HCT116 (cell line): ENCODE measurements at regions of chr4 and their contacts with region 1.

Region 1: DNA sequence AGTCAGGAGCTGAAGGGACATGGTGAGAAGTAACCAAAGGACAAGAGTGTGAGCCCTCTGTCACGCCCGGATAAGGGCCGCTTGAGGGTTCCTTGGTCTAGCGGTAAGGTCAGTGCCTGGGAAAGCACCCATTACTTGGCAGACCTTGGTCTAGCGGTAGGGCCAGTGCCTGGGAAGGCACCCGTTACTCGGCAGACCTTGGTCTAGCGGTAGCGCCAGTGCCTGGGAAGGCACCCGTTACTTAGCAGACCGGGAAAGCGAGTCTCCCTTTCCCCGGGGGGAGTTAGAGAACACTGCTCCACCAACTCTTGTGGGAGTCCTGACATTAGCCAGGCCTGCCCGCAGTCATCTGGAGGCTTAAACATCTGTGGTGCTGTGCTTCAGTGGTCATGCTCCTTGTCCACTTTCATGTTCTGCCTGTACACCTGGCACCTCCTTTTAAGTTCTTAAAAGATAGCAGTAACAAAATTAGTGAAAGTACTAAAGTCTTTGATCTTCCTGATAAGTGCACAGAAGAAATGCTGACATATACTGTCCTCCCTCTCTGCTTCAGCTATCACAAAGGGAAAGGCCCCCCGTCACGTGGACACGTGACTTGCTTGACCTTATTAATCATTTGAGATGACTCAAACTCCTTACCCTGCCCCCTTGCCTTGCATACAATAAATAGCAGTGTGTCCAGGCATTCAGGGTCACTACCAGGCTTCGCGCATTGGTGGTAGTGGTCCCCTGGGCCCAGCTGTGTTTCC is 9.3 kb upstream of the SEC24B start:
- DNase-seq: no peak
- ATAC-seq: no peak
- H3K4me3 ChIP-seq: no peak overlapping the region
- H3K27ac ChIP-seq: no peak overlapping the region
- H3K4me1 ChIP-seq: 0 out of 4 replicates have a peak, but pooled peaks cover 0 to 4% of the 10 kb centered on the region in 2 experiments
- H3K27me3 ChIP-seq: no peaks in the 10 kb centered on the region
- CTCF ChIP-seq: no peak
- POLR2A ChIP-seq: no peak
- RAD21 ChIP-seq: no peak

Region 2: GRCh38 chr4:108581083-108581482 is 843.2 kb before region 1 on chr4:
- CTCF ChIA-PET with region 1: no interaction called
- POLR2A ChIA-PET with region 1: no interaction called
- RAD21 ChIA-PET with region 1: no interaction called
- intact Hi-C with region 1: no loop called
- DNase-seq: no peak
- ATAC-seq: no peak
- H3K4me3 ChIP-seq: no peak overlapping the region
- H3K27ac ChIP-seq: no peak overlapping the region
- H3K4me1 ChIP-seq: no peaks in the 10 kb centered on the region
- H3K27me3 ChIP-seq: no peaks in the 10 kb centered on the region
- CTCF ChIP-seq: no peak
- POLR2A ChIP-seq: no peak
- RAD21 ChIP-seq: no peak

Region 3: GRCh38 chr4:109134268-109134667 is 290.0 kb before region 1 on chr4:
- CTCF ChIA-PET with region 1: no interaction called
- POLR2A ChIA-PET with region 1: no interaction called
- RAD21 ChIA-PET with region 1: no interaction called
- intact Hi-C with region 1: no loop called
- DNase-seq: no peak
- ATAC-seq: no peak
- H3K4me3 ChIP-seq: no peak overlapping the region
- H3K27ac ChIP-seq: no peak overlapping the region
- H3K4me1 ChIP-seq: no peaks in the 10 kb centered on the region
- H3K27me3 ChIP-seq: peaks cover 29% of the 10 kb centered on the region
- CTCF ChIP-seq: no peak
- POLR2A ChIP-seq: no peak
- RAD21 ChIP-seq: no peak

Region 4: DNA sequence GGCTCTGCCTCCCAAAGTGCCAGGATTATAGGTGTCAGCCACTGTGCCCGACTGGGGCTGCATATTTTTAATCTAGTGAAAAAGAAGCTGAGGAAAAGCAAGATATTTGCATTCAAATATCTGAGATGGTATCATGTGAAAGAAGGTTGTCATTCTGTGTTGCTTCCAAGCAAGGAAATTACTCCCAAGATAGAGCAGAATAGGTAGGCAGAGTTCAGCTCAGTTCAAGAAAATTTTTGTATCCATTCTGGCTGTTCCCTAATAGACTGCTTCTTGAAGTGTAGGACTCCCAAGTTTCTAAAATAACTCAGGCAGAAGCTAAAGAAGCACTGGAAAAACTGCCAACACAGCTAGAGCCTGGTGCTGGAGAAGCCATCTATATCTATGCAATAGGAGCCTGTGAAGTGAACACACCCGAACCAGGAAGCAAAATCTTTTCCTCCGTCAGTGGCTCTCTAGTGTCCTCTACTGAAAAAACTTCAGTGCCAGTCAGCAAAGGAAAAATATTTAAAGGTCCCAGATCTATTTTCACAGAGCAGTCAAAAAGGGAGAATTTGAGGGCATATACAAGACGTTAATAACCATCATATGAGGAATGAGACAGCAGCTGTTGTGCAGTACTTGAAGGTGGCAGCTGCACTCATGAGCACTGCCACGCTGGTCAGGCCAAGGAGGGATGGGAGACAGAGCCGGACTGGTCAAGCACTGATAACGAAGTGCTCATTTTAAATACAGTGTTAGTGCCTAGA is 150.0 kb after region 1 on chr4:
- CTCF ChIA-PET with region 1: interaction called, 4 read pairs
- POLR2A ChIA-PET with region 1: no interaction called
- RAD21 ChIA-PET with region 1: no interaction called
- intact Hi-C with region 1: loop called (anchors 2 kb)
- DNase-seq: no peak
- ATAC-seq: peak; percentile 83
- H3K4me3 ChIP-seq: no peak overlapping the region
- H3K27ac ChIP-seq: no peak overlapping the region
- H3K4me1 ChIP-seq: peaks cover 0 to 7% of the 10 kb centered on the region in 2 experiments; a peak in 2 of 4 replicates
- H3K27me3 ChIP-seq: no peaks in the 10 kb centered on the region
- CTCF ChIP-seq: peak; percentile 29 to 51 (median 50); a peak in 5 of 6 replicates
- POLR2A ChIP-seq: no peak
- RAD21 ChIP-seq: peak; percentile 70

Region 5: DNA sequence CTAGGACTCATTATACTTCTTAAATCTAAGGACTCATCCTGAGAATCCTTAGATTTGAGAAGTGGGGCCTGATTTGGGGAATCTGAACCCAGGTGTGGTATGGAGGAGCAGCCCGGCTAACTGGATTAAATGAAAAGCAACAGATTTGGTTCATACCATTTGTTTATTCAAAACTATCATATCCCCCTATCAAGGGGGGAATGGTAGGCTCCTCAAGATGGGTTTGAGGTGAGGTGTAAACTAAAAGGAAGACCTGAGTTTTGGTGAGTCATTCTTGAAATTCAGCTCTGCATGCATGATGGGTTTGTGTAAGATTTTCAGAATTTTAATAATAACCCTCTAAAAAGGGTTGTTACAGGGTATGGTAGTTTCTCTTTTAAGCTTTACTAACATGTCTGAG is 225.6 kb after region 1 on chr4:
- CTCF ChIA-PET with region 1: no interaction called
- POLR2A ChIA-PET with region 1: no interaction called
- RAD21 ChIA-PET with region 1: no interaction called
- intact Hi-C with region 1: loop called (anchors 5 kb)
- DNase-seq: no peak
- ATAC-seq: no peak
- H3K4me3 ChIP-seq: no peak overlapping the region
- H3K27ac ChIP-seq: no peak overlapping the region
- H3K4me1 ChIP-seq: no peaks in the 10 kb centered on the region
- H3K27me3 ChIP-seq: no peaks in the 10 kb centered on the region
- CTCF ChIP-seq: no peak
- POLR2A ChIP-seq: no peak
- RAD21 ChIP-seq: no peak

Region 6: GRCh38 chr4:109702950-109703663 is 278.8 kb after region 1 on chr4 and contains the start of gene CASP6:
- CTCF ChIA-PET with region 1: interaction called, 4 read pairs
- POLR2A ChIA-PET with region 1: no interaction called
- RAD21 ChIA-PET with region 1: no interaction called
- intact Hi-C with region 1: loop called (anchors 10 kb)
- DNase-seq: peak; percentile 51
- ATAC-seq: peak; percentile 87
- H3K4me3 ChIP-seq: peak within 1 kb of the TSS; percentile 71 to 72
- H3K27ac ChIP-seq: peak within 1 kb of the TSS; percentile 74
- H3K4me1 ChIP-seq: peaks cover 13 to 21% of the 10 kb centered on the region in 2 experiments; a peak in 3 of 4 replicates
- H3K27me3 ChIP-seq: no peaks in the 10 kb centered on the region
- CTCF ChIP-seq: peak; percentile 37 to 64 (median 54); a peak in 5 of 6 replicates
- POLR2A ChIP-seq: no peak
- RAD21 ChIP-seq: peak; percentile 46
- total RNA-seq, gene CASP6: 18.1 TPM

Region 7: DNA sequence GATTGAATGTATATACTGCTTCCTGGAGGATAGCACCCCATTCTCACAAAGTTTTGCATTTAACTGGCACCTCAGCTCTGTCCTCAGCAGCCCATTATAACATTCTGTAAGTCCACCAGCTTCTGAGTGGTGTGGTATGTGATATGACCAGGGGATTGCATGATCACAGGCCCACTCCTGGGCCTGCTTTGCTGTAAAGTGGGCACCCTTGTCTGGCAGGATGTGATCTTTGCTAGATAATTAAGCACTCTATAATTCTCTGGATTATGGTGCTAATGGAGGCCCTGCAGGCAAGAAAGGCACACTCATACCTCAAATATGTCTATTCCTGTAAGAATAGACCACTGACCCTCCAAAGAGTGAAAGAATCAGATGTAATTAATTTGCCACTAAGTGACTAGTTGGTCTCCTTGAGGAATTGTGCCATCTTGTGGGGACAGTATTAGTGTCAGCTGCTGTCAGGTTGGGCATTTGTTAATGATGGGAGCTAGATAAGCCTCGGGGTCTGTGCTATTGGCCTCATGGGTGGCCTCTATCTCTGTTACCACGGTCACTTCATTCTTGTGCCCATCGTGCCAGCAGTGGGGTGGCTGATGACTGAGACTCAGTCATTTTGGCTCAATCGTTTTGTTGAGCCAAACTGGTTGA is 379.8 kb after region 1 on chr4:
- CTCF ChIA-PET with region 1: interaction called, 17 read pairs
- POLR2A ChIA-PET with region 1: no interaction called
- RAD21 ChIA-PET with region 1: no interaction called
- intact Hi-C with region 1: loop called (anchors 1 kb)
- DNase-seq: peak; percentile 51
- ATAC-seq: peak; percentile 94
- H3K4me3 ChIP-seq: no peak overlapping the region
- H3K27ac ChIP-seq: no peak overlapping the region
- H3K4me1 ChIP-seq: peaks cover 0 to 5% of the 10 kb centered on the region in 2 experiments; a peak in 1 of 4 replicates
- H3K27me3 ChIP-seq: no peaks in the 10 kb centered on the region
- CTCF ChIP-seq: peak; percentile 56 to 71 (median 62); a peak in 5 of 6 replicates
- POLR2A ChIP-seq: no peak
- RAD21 ChIP-seq: peak; percentile 85

Region 8: DNA sequence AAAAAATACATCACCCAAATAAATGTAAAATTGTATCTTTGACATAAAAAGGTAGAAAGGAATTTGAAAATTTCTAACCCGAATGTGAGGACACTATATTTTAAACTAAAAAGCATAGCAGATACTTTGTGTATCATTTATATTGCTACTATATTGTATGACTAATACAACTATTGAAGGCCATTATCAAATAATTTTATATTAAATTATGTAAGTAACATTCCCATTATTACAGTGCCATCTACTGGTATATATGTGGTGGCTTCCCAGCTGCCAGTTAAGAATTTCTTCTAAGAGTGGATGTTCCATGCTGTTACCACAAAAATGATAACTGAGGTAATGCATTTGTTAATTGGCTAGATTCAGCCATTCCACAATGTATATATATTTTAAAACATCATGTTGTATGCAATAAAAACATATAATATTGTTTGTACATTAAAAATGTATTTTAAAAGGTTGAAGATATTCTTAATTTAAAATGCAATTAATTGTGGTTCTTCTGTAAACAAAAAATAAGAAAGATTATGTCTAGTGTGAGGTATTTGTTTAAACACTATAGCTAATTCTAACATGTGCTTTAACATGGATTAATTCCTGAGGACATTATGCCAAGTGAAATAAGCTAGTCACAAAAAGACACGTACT is 553.7 kb after region 1 on chr4:
- CTCF ChIA-PET with region 1: interaction called, 6 read pairs
- POLR2A ChIA-PET with region 1: no interaction called
- RAD21 ChIA-PET with region 1: no interaction called
- intact Hi-C with region 1: loop called (anchors 1 kb)
- DNase-seq: peak; percentile 27
- ATAC-seq: peak; percentile 68
- H3K4me3 ChIP-seq: no peak overlapping the region
- H3K27ac ChIP-seq: no peak overlapping the region
- H3K4me1 ChIP-seq: peaks cover 0 to 4% of the 10 kb centered on the region in 2 experiments; a peak in 1 of 4 replicates
- H3K27me3 ChIP-seq: no peaks in the 10 kb centered on the region
- CTCF ChIP-seq: peak; percentile 57 to 75 (median 58)
- POLR2A ChIP-seq: no peak
- RAD21 ChIP-seq: peak; percentile 80

Region 9: DNA sequence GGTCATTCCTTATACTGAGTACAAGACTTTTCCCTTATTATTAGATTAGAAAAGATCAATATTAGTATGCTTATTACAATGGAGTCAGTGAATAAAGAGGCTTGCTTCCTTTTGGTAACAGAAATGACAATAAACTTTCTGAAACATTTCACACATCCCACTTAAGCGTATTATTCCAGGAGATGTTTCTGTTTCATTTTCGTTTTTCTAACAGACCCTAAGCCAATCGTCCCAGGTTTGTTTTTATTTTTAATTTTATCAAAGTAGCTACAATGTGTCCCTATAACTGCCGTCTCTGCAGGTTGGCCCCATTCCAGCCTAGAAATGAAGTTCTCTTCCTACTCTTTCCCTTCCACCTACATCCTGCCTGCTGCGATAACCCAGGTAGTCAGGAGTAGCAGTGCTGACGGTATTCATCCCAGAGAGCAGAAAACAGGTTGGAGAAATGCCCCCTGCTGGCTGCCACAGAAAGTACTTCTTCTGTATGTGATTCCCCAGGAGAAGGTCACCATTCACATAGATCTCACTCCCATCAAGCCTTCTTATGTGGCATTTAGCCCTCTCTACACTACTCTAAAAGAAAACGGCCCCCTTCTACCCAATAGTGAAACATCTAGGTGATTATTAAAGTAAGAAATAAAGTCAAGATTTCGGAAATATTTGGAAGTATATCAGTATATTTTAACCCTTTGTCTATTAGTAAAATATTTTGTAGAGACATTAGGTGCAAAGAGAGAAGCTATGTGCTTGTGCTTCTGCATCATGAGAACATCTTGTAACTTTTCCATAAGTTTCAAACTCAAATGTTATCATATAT is 1092.0 kb after region 1 on chr4:
- CTCF ChIA-PET with region 1: interaction called, 3 read pairs
- POLR2A ChIA-PET with region 1: no interaction called
- RAD21 ChIA-PET with region 1: no interaction called
- intact Hi-C with region 1: loop called (anchors 5 kb)
- DNase-seq: peak; percentile 72
- ATAC-seq: peak; percentile 98
- H3K4me3 ChIP-seq: peak overlapping the region; percentile 33 to 53
- H3K27ac ChIP-seq: no peak overlapping the region
- H3K4me1 ChIP-seq: peaks cover 0 to 9% of the 10 kb centered on the region in 2 experiments; a peak in 1 of 4 replicates
- H3K27me3 ChIP-seq: no peaks in the 10 kb centered on the region
- CTCF ChIP-seq: peak; percentile 73 to 84 (median 79)
- POLR2A ChIP-seq: no peak
- RAD21 ChIP-seq: peak; percentile 61